PC-9 (cell line): ENCODE measurements at regions of chr5 and their contacts with region 1.

Region 1: DNA sequence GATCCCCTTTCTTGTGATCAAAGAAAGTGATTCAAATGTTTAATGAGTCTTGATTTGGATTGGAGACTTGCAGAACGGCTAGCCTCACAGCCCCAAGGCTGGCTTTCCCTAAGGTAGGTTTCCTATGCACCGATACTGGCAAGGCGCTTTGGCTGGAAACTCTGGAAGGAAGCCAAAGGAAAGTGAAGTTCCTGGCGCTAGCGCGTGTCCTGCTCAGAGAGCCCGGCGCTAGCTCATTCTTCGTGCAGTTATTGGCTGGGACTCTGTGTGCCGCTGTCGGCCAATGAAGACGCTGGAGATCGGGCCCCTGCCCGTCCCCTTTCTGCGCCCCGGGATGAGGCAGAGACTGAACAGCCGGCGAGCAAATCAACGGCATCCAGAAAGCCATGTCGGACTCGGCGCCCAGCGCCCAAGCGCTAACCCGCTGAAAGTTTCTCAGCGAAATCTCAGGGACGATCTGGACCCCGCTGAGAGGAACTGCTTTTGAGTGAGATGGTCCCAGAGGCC is at the start of gene PCDHGC3:
- DNase-seq: peak; percentile 71
- H3K4me3 ChIP-seq: peak within 1 kb of the TSS; percentile 58
- H3K27ac ChIP-seq: no peak within 1 kb of the TSS
- H3K4me1 ChIP-seq: no peaks in the 10 kb centered on the region
- H3K27me3 ChIP-seq: peaks cover 10% of the 10 kb centered on the region
- CTCF ChIP-seq: peak; percentile 33; the same call in 1 of the 2 replicates
- total RNA-seq, gene PCDHGC3: 0.50 and 0.53 TPM in 2 replicates

Region 2: DNA sequence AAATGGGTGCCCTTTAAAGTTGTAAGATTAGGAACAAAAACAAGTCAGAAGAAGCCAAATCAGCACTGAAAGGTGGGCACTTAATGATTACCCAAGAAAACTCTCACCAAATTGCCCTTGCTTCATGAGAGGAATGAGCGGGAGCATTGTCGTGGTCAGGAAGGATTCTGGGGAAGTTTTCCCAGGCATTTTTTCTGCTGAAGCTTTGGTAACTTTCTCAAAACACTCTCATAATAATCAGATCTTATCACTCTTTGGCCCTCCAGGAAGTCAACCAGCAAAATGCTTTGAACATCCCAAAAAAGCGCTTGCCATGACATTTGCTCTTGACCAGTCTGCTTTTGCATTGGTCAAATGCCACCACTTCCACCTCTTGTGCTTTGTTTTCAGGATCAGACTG is 10.3 kb before region 1 on chr5:
- CTCF ChIA-PET with region 1: interaction called, 10 read pairs
- POLR2A ChIA-PET with region 1: no interaction called
- intact Hi-C with region 1: no loop called
- DNase-seq: no peak
- H3K4me3 ChIP-seq: no peak overlapping the region
- H3K27ac ChIP-seq: no peak overlapping the region
- H3K4me1 ChIP-seq: no peaks in the 10 kb centered on the region
- H3K27me3 ChIP-seq: no peaks in the 10 kb centered on the region
- CTCF ChIP-seq: no peak

Region 3: GRCh38 chr5:141492168-141492885 is 16.6 kb after region 1 on chr5:
- CTCF ChIA-PET with region 1: no interaction called
- POLR2A ChIA-PET with region 1: no interaction called
- intact Hi-C with region 1: no loop called
- DNase-seq: no peak
- H3K4me3 ChIP-seq: no peak overlapping the region
- H3K27ac ChIP-seq: no peak overlapping the region
- H3K4me1 ChIP-seq: no peaks in the 10 kb centered on the region
- H3K27me3 ChIP-seq: peaks cover 37% of the 10 kb centered on the region
- CTCF ChIP-seq: no peak